K562 (cell line): ENCODE measurements at regions of chr10 and their contacts with region 1.

Region 1: GRCh38 chr10:119416855-119417254 is 125.7 kb downstream of the RGS10 start:
- DNase-seq: peak; percentile 60 to 72 (median 66)
- ATAC-seq: peak; percentile 90
- H3K4me3 ChIP-seq: no peak overlapping the region
- H3K27ac ChIP-seq: no peak overlapping the region
- H3K4me1 ChIP-seq: peaks cover 0 to 4% of the 10 kb centered on the region in 2 experiments; a peak in 1 of 5 replicates
- H3K27me3 ChIP-seq: peaks cover 0 to 25% of the 10 kb centered on the region in 2 experiments; a peak in 3 of 5 replicates
- CTCF ChIP-seq: peak; percentile 72 to 77 (median 75)
- EP300 ChIP-seq: no peak
- POLR2A ChIP-seq: no peak
- RAD21 ChIP-seq: peak; percentile 66 to 87

Region 2: DNA sequence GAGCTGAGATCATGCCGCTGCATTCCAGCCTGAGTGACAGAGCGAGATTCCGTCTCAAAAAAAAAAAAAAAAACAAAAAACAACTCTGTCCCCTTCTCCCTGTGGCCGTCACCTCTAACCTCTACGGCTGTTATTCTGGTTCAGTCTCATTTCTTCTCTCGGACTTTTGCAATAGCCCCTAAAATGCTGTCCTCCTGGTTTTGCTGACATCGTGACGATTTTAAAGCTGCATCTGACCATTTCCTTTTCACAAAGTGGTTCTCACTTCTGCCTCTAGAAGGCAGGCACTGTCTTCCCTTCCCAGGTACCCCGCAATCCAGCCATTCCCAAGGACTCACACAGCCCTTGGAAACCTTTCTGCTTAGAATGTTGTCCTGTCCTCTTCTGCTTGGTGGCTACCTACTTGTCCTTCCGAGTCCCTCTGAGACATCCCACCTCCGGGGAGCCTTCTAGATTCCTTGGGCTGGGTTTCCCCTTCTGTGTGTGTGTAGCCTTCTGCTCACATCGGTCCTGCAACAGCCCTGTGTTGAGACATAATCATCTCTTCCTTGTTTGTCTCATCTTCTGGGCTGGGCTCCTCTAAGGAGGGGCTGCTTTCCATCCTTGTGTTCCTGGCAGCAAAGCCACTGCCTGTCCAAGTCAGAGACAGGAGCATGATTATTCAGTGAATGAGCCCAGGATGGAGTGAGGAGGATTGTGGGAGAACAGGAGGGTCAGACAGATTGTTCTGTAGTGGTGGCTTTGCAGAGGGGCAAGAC is 126.4 kb before region 1 on chr10:
- CTCF ChIA-PET with region 1: interaction called, 3 read pairs
- POLR2A ChIA-PET with region 1: no interaction called
- in situ Hi-C with region 1: no loop called
- intact Hi-C with region 1: loop called (anchors 5 kb)
- DNase-seq: no peak
- ATAC-seq: no peak; the same call in 2 of the 3 replicates
- H3K4me3 ChIP-seq: no peak overlapping the region
- H3K27ac ChIP-seq: no peak overlapping the region
- H3K4me1 ChIP-seq: peaks cover 3 to 4% of the 10 kb centered on the region in 2 experiments; a peak in 2 of 5 replicates
- H3K27me3 ChIP-seq: peaks cover 0 to 16% of the 10 kb centered on the region in 2 experiments; a peak in 2 of 5 replicates
- CTCF ChIP-seq: peak in 1 of 3 experiments; percentile 33; a peak in 2 of 6 replicates
- EP300 ChIP-seq: no peak
- POLR2A ChIP-seq: no peak
- RAD21 ChIP-seq: peak in 1 of 2 experiments; percentile 49; a peak in 3 of 4 replicates

Region 3: GRCh38 chr10:120253131-120253530 is 836.3 kb after region 1 on chr10:
- CTCF ChIA-PET with region 1: no interaction called
- POLR2A ChIA-PET with region 1: no interaction called
- in situ Hi-C with region 1: no loop called
- intact Hi-C with region 1: no loop called
- DNase-seq: no peak
- ATAC-seq: no peak
- H3K4me3 ChIP-seq: no peak overlapping the region
- H3K27ac ChIP-seq: no peak overlapping the region
- H3K4me1 ChIP-seq: no peaks in the 10 kb centered on the region
- H3K27me3 ChIP-seq: no peaks in the 10 kb centered on the region; a peak in 1 of 5 replicates
- CTCF ChIP-seq: no peak
- EP300 ChIP-seq: no peak
- POLR2A ChIP-seq: no peak
- RAD21 ChIP-seq: no peak